GM12878 (cell line): ENCODE measurements at regions of chr10 and their contacts with region 1.

Region 1: DNA sequence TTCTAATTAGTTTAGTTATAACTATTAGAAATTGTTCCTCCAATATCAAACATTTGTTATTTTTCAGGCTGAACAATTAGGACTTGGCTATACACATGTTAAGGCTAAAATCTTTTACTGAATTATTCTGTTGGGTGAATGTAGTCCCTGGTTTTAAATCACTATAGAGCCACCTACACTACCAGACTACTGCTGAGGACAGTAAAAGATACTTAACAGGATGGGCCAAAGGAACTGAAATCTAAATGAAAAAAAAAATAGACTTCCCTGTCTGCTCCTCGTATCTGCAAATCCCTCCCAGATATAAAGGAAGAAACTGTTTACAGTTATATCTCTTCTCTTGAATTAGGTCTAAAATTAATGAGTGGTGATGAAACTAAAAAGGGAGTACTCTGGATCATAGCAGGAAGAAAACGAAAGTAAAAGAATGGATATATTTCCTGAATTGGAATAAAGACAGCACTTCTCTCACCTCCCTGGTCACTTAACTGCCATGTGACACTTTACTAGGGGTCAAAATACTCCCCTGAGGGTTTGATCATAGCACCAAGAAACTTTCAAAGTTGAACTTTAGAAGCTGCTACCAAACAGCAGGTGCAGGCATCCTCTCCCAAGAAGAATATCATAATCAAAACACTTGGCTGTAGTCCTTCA is 12.7 kb downstream of the FBXW4 start:
- DNase-seq: no peak
- ATAC-seq: peak; percentile 38
- H3K4me3 ChIP-seq: no peak overlapping the region; the same call in 1 of the 2 replicates
- H3K27ac ChIP-seq: no peak overlapping the region
- H3K4me1 ChIP-seq: peaks cover 12% of the 10 kb centered on the region
- H3K27me3 ChIP-seq: no peaks in the 10 kb centered on the region
- CTCF ChIP-seq: no peak
- EP300 ChIP-seq: no peak
- POLR2A ChIP-seq: no peak
- RAD21 ChIP-seq: no peak

Region 2: DNA sequence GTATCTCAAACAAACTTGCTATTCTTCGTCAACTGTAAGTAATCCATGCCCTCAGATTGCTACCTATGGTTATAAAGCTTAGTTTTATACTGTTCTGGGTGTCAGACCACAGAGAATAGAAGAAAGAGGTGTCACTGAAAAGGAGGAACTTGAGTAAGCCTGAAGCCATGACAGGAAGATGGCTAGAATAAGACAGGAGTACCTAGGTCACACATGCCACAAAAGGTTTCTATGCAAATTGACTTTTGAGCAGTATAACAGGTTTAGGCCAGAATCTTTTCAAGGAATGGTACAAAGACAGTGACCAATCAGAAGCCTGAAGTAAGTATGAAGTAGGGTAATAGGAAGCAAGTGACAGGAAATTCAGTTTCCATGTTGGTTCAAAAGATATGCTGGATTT is 10.8 kb before region 1 on chr10:
- CTCF ChIA-PET with region 1: interaction called, 10 read pairs
- POLR2A ChIA-PET with region 1: interaction called, 6 read pairs
- RAD21 ChIA-PET with region 1: interaction called, 3 read pairs
- SMC1A ChIA-PET with region 1: interaction called, 4 read pairs
- in situ Hi-C with region 1: no loop called
- intact Hi-C with region 1: no loop called
- DNase-seq: peak; percentile 60
- ATAC-seq: peak; percentile 91
- H3K4me3 ChIP-seq: no peak overlapping the region
- H3K27ac ChIP-seq: peak overlapping the region; percentile 78
- H3K4me1 ChIP-seq: peaks cover 26% of the 10 kb centered on the region
- H3K27me3 ChIP-seq: no peaks in the 10 kb centered on the region
- CTCF ChIP-seq: no peak
- EP300 ChIP-seq: no peak
- POLR2A ChIP-seq: no peak
- RAD21 ChIP-seq: no peak

Region 3: DNA sequence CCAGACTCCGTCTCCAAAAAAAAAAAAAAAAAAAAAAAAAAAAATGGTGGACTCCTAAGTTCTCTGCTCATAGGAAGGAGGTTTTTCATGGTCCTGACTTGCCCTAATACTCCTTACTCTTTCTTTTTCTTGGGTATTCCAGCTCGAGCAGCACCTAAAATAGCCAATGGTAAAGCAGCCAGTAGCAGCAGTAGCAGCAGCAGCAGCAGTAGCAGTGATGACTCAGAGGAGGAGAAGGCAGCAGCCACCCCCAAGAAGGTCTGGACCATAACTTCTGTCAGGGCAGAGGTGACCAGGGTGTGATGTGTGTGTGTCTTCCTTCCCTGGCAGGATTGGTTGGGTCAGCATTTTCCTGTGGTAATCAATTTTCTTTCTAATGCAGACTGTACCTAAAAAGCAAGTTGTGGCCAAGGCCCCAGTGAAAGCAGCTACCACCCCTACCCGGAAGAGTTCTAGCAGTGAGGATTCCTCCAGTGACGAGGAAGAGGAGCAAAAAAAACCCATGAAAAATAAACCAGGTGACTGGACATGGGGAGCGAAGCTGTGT is 476.8 kb after region 1 on chr10:
- CTCF ChIA-PET with region 1: no interaction called
- POLR2A ChIA-PET with region 1: no interaction called
- RAD21 ChIA-PET with region 1: no interaction called
- SMC1A ChIA-PET with region 1: no interaction called
- in situ Hi-C with region 1: no loop called
- intact Hi-C with region 1: no loop called
- DNase-seq: no peak
- ATAC-seq: no peak
- H3K4me3 ChIP-seq: no peak overlapping the region
- H3K27ac ChIP-seq: no peak overlapping the region
- H3K4me1 ChIP-seq: no peaks in the 10 kb centered on the region; the same call in 1 of the 2 replicates
- H3K27me3 ChIP-seq: no peaks in the 10 kb centered on the region
- CTCF ChIP-seq: no peak
- EP300 ChIP-seq: no peak
- POLR2A ChIP-seq: no peak
- RAD21 ChIP-seq: no peak